ENCODE measurements at regions of chr6 and their contacts with region 1.

Region 1: GRCh38 chr6:57221936-57222742 is at the start of gene RAB23:
- DNase-seq: peak; percentile 65 to 92 (median 80)
- ATAC-seq: peak; percentile 88
- H3K4me3 ChIP-seq: peak within 1 kb of the TSS; percentile 84
- H3K4me3 Mint-ChIP-seq: peak within 1 kb of the TSS; percentile 99
- H3K27ac ChIP-seq: no peak within 1 kb of the TSS
- H3K27ac Mint-ChIP-seq: peak within 1 kb of the TSS; percentile 67
- H3K4me1 ChIP-seq: peaks cover 14% of the 10 kb centered on the region
- H3K4me1 Mint-ChIP-seq: peaks cover 14% of the 10 kb centered on the region
- H3K27me3 ChIP-seq: peaks cover 8 to 10% of the 10 kb centered on the region in 2 experiments
- H3K27me3 Mint-ChIP-seq: peaks cover 17% of the 10 kb centered on the region
- CTCF ChIP-seq: no peak
- total RNA-seq, gene RAB23: 0.45 to 0.49 TPM

Region 2: DNA sequence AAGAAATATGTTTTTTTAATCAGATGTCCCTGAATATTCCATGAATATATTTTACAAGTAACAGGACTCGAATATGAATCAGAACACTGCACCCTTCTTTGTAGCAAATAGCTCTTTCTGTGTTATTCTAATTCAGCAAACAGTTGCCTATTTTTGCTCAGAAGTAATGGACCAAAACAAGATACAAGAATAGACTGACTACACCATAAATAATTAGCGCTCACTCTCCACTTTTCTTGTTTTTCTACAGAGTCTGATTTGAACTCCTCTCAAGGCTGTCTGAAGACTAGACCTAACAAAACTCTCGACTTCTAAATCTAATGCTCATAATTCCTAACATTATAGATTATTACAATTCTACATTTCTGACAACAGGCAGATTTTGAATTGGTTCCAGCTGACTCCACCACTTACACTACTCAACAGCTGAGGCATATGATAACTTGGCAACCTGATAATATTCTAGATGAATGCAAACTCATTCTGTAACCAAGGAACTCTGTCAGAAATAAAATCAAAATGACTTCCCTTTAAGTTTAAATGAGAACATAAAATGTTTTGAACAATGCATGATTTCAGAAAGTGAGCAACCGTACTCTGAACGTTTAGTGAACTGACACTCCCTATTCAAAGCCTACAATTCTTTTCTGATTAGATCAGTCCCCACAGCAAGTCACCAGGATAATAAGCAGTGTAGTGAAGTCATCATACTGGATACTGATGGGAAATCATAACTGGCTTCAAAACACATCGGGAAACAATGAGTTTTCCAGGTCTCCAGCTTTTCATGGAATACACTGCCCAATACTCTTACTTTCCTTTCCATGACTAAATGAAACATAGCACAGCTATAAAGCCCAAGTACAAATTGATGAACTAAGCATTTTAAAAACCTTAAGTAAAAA is 381.4 kb before region 1 on chr6:
- CTCF ChIA-PET with region 1: no interaction called
- POLR2A ChIA-PET with region 1: no interaction called
- intact Hi-C with region 1: no loop called
- DNase-seq: no peak
- ATAC-seq: no peak
- H3K4me3 ChIP-seq: no peak overlapping the region
- H3K4me3 Mint-ChIP-seq: no peak overlapping the region
- H3K27ac ChIP-seq: no peak overlapping the region
- H3K27ac Mint-ChIP-seq: no peak overlapping the region
- H3K4me1 ChIP-seq: peaks cover 9% of the 10 kb centered on the region
- H3K4me1 Mint-ChIP-seq: peaks cover 8% of the 10 kb centered on the region
- H3K27me3 ChIP-seq: peaks cover 11 to 44% of the 10 kb centered on the region in 2 experiments
- H3K27me3 Mint-ChIP-seq: peaks cover 67% of the 10 kb centered on the region
- CTCF ChIP-seq: no peak

Region 3: GRCh38 chr6:57040009-57040408 is 182.1 kb before region 1 on chr6:
- CTCF ChIA-PET with region 1: no interaction called
- POLR2A ChIA-PET with region 1: no interaction called
- intact Hi-C with region 1: loop called (anchors 5 to 10 kb)
- DNase-seq: no peak
- ATAC-seq: no peak
- H3K4me3 ChIP-seq: no peak overlapping the region
- H3K4me3 Mint-ChIP-seq: no peak overlapping the region
- H3K27ac ChIP-seq: no peak overlapping the region
- H3K27ac Mint-ChIP-seq: no peak overlapping the region
- H3K4me1 ChIP-seq: no peaks in the 10 kb centered on the region
- H3K4me1 Mint-ChIP-seq: no peaks in the 10 kb centered on the region
- H3K27me3 ChIP-seq: peaks cover 15 to 30% of the 10 kb centered on the region in 2 experiments
- H3K27me3 Mint-ChIP-seq: peaks cover 44% of the 10 kb centered on the region
- CTCF ChIP-seq: no peak

Region 4: GRCh38 chr6:57048577-57048976 is 173.6 kb before region 1 on chr6:
- CTCF ChIA-PET with region 1: interaction called, 3 read pairs
- POLR2A ChIA-PET with region 1: no interaction called
- intact Hi-C with region 1: loop called (anchors 5 to 10 kb)
- DNase-seq: no peak
- ATAC-seq: no peak
- H3K4me3 ChIP-seq: no peak overlapping the region
- H3K4me3 Mint-ChIP-seq: peak overlapping the region; percentile 57
- H3K27ac ChIP-seq: no peak overlapping the region
- H3K27ac Mint-ChIP-seq: peak overlapping the region; percentile 61
- H3K4me1 ChIP-seq: peaks cover 4% of the 10 kb centered on the region
- H3K4me1 Mint-ChIP-seq: peaks cover 34% of the 10 kb centered on the region
- H3K27me3 ChIP-seq: no peaks in the 10 kb centered on the region
- H3K27me3 Mint-ChIP-seq: no peaks in the 10 kb centered on the region
- CTCF ChIP-seq: no peak

Region 5: DNA sequence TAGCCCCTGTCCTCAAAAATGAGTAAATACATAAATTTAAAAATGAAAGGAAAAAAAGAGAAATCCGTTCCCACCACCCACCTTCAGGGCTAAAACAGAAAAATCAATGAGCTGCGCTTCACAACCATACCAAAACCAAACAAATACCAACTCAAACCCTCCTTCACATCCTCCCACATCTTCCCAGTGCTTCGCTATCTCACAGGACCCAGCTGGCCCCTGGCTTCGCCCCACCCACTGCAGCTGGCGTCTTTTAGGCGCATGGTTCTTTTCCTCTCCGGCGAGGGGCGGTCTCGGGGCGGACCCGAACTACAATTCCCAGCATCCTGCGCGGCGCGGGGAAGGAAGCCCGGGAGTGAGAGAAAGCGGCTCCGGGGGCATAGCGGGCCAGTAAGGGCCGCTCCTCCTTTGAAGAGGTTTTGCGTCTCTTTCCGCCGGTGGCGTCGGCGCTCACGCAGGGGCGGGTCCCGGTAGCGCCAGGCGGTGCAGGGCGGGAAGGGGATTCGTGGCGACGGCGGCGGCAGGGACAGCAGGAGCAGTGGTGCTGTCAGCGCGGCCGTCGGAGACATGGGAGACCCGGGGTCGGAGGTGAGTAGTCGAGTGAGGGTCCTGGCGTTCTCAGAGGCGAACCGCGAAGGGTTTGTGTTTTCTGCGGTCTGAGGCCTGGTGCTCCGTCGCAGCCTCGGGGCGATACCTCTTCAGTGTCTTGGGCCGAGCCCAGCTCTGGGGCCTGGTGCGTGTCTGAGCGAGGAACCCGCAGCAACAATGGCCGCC is 132.3 kb before region 1 on chr6 and contains the start of gene ZNF451:
- CTCF ChIA-PET with region 1: no interaction called
- POLR2A ChIA-PET with region 1: no interaction called
- intact Hi-C with region 1: loop called (anchors 2 to 5 kb)
- DNase-seq: peak; percentile 90 to 98 (median 96)
- ATAC-seq: peak; percentile 89
- H3K4me3 ChIP-seq: peak within 1 kb of the TSS; percentile 59
- H3K4me3 Mint-ChIP-seq: peak within 1 kb of the TSS; percentile 88
- H3K27ac ChIP-seq: peak within 1 kb of the TSS; percentile 41 to 60
- H3K27ac Mint-ChIP-seq: peak within 1 kb of the TSS; percentile 85
- H3K4me1 ChIP-seq: peaks cover 14% of the 10 kb centered on the region
- H3K4me1 Mint-ChIP-seq: peaks cover 36% of the 10 kb centered on the region
- H3K27me3 ChIP-seq: no peaks in the 10 kb centered on the region
- H3K27me3 Mint-ChIP-seq: no peaks in the 10 kb centered on the region
- CTCF ChIP-seq: no peak
- total RNA-seq, gene ZNF451: 124 to 132 TPM

Region 6: GRCh38 chr6:57172136-57173055 is 49.7 kb before region 1 on chr6 and contains the start of gene BAG2:
- CTCF ChIA-PET with region 1: no interaction called
- POLR2A ChIA-PET with region 1: interaction called, 17 read pairs
- intact Hi-C with region 1: loop called (anchors 2 kb)
- DNase-seq: peak; percentile 71 to 92 (median 82)
- ATAC-seq: peak; percentile 85
- H3K4me3 ChIP-seq: peak within 1 kb of the TSS; percentile 69
- H3K4me3 Mint-ChIP-seq: peak within 1 kb of the TSS; percentile 89
- H3K27ac ChIP-seq: peak within 1 kb of the TSS; percentile 75 to 79
- H3K27ac Mint-ChIP-seq: peak within 1 kb of the TSS; percentile 83
- H3K4me1 ChIP-seq: peaks cover 17% of the 10 kb centered on the region
- H3K4me1 Mint-ChIP-seq: peaks cover 42% of the 10 kb centered on the region
- H3K27me3 ChIP-seq: no peaks in the 10 kb centered on the region
- H3K27me3 Mint-ChIP-seq: no peaks in the 10 kb centered on the region
- CTCF ChIP-seq: no peak
- total RNA-seq, gene BAG2: 5.4 to 5.6 TPM

Region 7: DNA sequence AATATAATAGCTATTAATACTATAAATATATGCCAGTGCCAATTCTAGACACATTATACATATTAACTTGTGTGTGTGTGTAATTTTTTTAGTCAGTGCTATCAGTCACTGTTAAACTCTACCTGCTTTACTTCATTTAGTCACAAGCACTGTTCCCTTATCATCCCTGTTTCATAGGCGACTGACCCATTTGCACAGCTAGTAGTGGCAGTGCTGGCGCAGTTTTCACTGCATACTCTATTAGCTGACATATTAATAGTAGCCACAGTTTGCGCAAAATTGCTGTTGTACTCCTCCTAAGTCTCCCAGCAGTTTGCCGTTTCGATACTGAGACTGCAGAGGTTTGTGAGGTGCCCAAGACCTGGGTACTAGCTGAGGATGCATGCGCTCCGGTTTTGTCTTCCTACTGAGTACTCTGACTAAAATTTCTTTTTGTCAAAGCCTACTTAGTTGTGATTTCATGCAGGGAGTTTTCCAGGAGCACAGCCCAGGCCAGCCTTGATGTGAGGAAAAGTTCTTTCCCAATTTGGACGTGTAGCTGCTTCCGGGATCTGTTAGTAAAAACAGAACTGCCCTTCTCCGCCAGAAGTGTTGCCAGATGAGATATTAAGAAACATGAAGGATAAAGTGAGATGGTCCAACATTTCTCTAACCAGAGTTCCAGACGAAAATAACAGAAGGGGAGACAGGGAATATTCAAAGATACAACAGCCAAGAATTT is 44.4 kb before region 1 on chr6:
- CTCF ChIA-PET with region 1: no interaction called
- POLR2A ChIA-PET with region 1: interaction called, 17 read pairs
- intact Hi-C with region 1: loop called (anchors 2 kb)
- DNase-seq: no peak
- ATAC-seq: no peak
- H3K4me3 ChIP-seq: no peak overlapping the region
- H3K4me3 Mint-ChIP-seq: no peak overlapping the region
- H3K27ac ChIP-seq: no peak overlapping the region
- H3K27ac Mint-ChIP-seq: no peak overlapping the region
- H3K4me1 ChIP-seq: peaks cover 9% of the 10 kb centered on the region
- H3K4me1 Mint-ChIP-seq: peaks cover 34% of the 10 kb centered on the region
- H3K27me3 ChIP-seq: no peaks in the 10 kb centered on the region
- H3K27me3 Mint-ChIP-seq: no peaks in the 10 kb centered on the region
- CTCF ChIP-seq: no peak

Region 8: DNA sequence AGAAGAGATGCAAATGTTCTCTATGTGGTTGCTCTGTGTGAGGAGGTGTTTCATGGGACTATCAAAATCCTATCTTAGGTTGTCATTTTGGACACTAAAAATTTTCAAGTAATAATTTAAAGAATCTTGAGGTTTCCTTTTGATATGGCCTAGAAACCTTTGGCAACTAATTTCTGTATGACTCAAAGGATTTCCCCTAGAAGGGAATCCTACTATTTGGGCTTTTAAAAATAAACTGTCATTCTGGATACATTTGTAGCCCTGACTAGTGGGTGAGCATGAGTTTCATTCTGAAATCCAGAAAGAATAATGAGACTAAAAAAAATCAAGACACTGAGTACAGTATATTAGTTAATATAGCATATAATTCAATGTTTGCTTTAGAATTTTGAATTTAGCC is 25.5 kb after region 1 on chr6:
- CTCF ChIA-PET with region 1: no interaction called
- POLR2A ChIA-PET with region 1: no interaction called
- intact Hi-C with region 1: no loop called
- DNase-seq: no peak
- ATAC-seq: no peak
- H3K4me3 ChIP-seq: no peak overlapping the region
- H3K4me3 Mint-ChIP-seq: no peak overlapping the region
- H3K27ac ChIP-seq: no peak overlapping the region
- H3K27ac Mint-ChIP-seq: no peak overlapping the region
- H3K4me1 ChIP-seq: no peaks in the 10 kb centered on the region
- H3K4me1 Mint-ChIP-seq: no peaks in the 10 kb centered on the region
- H3K27me3 ChIP-seq: no peaks in the 10 kb centered on the region
- H3K27me3 Mint-ChIP-seq: no peaks in the 10 kb centered on the region
- CTCF ChIP-seq: no peak

Region 9: GRCh38 chr6:57974653-57975052 is 752.5 kb after region 1 on chr6:
- CTCF ChIA-PET with region 1: no interaction called
- POLR2A ChIA-PET with region 1: no interaction called
- intact Hi-C with region 1: loop called in 1 of 2 experiments (anchors 10 kb)
- DNase-seq: no peak
- ATAC-seq: no peak
- H3K4me3 ChIP-seq: no peak overlapping the region
- H3K4me3 Mint-ChIP-seq: no peak overlapping the region
- H3K27ac ChIP-seq: no peak overlapping the region
- H3K27ac Mint-ChIP-seq: no peak overlapping the region
- H3K4me1 ChIP-seq: no peaks in the 10 kb centered on the region
- H3K4me1 Mint-ChIP-seq: no peaks in the 10 kb centered on the region
- H3K27me3 ChIP-seq: no peaks in the 10 kb centered on the region
- H3K27me3 Mint-ChIP-seq: peaks cover 28% of the 10 kb centered on the region
- CTCF ChIP-seq: no peak

Measured in CD4-positive, alpha-beta T cell (primary cell).